ENCODE measurements at regions of chr5 and their contacts with region 1.

Region 1: GRCh38 chr5:77491783-77492652 is at the start of gene WDR41:
- DNase-seq: peak; percentile 65 to 96
- H3K4me3 ChIP-seq: peak within 1 kb of the TSS; percentile 80 to 87
- H3K27ac ChIP-seq: peak within 1 kb of the TSS; percentile 95 to 97
- H3K4me1 ChIP-seq: peaks cover 0 to 13% of the 10 kb centered on the region in 2 donors
- H3K27me3 ChIP-seq: no peaks in the 10 kb centered on the region
- CTCF ChIP-seq: peak; percentile 75 to 94 (median 85)
- total RNA-seq, gene WDR41: 45.4 TPM

Region 2: DNA sequence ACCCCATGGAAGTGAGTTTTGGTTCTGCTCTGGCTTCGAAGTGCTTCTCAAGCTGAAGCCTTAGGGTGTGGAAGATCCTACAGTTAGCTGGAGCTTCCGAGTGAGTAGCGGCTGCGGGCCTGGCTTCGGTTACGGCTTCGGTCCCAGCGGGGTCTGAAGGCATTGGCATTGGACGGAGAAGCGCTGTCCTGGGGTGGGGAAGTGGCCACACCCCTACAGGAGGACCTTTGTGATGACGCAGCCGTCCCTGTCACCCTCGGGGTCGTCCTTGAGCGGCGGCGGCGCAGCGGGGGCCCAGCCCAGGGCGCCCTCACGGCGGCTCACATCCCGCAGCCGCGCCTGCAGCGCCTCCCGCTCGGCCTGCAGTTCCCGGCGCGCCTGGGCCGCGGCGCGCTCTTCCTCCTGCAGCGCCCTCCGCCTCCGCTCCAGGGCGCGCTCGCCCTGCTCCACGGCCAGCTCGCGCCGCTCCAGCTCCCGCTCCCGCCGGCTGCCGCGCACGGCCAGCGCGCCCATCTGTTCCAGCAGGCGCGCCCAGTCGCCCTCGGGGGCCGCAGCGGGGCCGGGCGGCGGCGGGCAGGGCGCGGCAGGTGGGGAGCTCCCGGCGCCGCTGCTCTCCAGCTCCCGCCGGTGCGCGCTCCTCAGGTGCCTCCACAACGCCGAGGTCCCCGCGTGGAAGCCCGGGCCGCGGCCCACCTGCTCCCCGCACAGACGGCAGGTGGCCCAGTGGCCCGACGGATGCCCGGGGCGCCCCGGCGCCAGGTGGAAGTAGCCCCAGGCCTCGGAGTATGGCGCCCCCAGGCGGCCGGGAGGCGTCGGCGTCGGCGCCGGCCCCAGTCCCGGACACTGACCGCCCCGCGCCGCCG is 414.8 kb before region 1 on chr5:
- intact Hi-C with region 1: loop called (anchors 2 kb)
- DNase-seq: peak in 1 of 2 donors; percentile 74
- H3K4me3 ChIP-seq: peak overlapping the region; percentile 62 to 69
- H3K27ac ChIP-seq: peak overlapping the region in 1 of 2 donors; percentile 30
- H3K4me1 ChIP-seq: peaks cover 0 to 4% of the 10 kb centered on the region in 2 donors
- H3K27me3 ChIP-seq: no peaks in the 10 kb centered on the region
- CTCF ChIP-seq: peak; percentile 26 to 42 (median 28)

Region 3: GRCh38 chr5:77143998-77144836 is 347.8 kb before region 1 on chr5:
- intact Hi-C with region 1: loop called (anchors 1 kb)
- DNase-seq: peak in 1 of 2 donors; percentile 86
- H3K4me3 ChIP-seq: no peak overlapping the region
- H3K27ac ChIP-seq: peak overlapping the region; percentile 54 to 58
- H3K4me1 ChIP-seq: peaks cover 0 to 6% of the 10 kb centered on the region in 2 donors
- H3K27me3 ChIP-seq: no peaks in the 10 kb centered on the region
- CTCF ChIP-seq: peak; percentile 60 to 83 (median 82)

Region 4: GRCh38 chr5:77437194-77437593 is 54.8 kb before region 1 on chr5:
- intact Hi-C with region 1: loop called (anchors 5 kb)
- DNase-seq: no peak
- H3K4me3 ChIP-seq: no peak overlapping the region
- H3K27ac ChIP-seq: no peak overlapping the region
- H3K4me1 ChIP-seq: no peaks in the 10 kb centered on the region
- H3K27me3 ChIP-seq: no peaks in the 10 kb centered on the region
- CTCF ChIP-seq: peak in 2 of 3 experiments; percentile 32 to 57

Region 5: GRCh38 chr5:78294248-78295034 is 802.4 kb after region 1 on chr5 and contains the start of gene AP3B1:
- intact Hi-C with region 1: loop called (anchors 10 kb)
- DNase-seq: peak; percentile 98 to 100
- H3K4me3 ChIP-seq: peak within 1 kb of the TSS; percentile 86 to 97
- H3K27ac ChIP-seq: peak within 1 kb of the TSS; percentile 84 to 87
- H3K4me1 ChIP-seq: peaks cover 0 to 11% of the 10 kb centered on the region in 2 donors
- H3K27me3 ChIP-seq: no peaks in the 10 kb centered on the region
- CTCF ChIP-seq: no peak
- total RNA-seq, gene AP3B1: 37.3 TPM

Region 6: GRCh38 chr5:78430866-78431265 is 938.8 kb after region 1 on chr5:
- intact Hi-C with region 1: no loop called
- DNase-seq: no peak
- H3K4me3 ChIP-seq: no peak overlapping the region
- H3K27ac ChIP-seq: no peak overlapping the region
- H3K4me1 ChIP-seq: no peaks in the 10 kb centered on the region
- H3K27me3 ChIP-seq: no peaks in the 10 kb centered on the region
- CTCF ChIP-seq: no peak